CD4-positive, alpha-beta T cell (primary cell): ENCODE measurements at regions of chrX and their contacts with region 1.

Region 1: DNA sequence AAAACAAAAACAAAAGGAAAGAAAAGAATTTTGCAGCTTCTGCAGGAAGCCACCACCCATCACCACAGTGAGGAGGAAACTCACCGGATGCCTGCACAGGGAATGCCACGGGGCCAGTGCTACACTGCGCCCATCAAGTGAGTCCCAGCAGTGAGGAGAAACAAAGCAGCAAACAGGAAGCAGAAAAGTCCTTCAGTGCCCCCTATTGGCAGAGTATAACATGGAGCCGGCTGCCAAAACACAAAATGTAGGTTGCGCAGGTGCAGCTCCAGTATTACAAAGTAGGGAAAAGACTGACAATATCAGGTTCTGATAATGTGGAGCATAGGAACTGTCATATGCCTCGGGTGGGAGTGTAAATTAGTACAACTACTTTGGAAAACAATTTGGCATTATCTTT is 23.3 kb upstream of the SCML2 start:
- DNase-seq: peak in 5 of 14 experiments; percentile 2 to 57 (median 43)
- ATAC-seq: peak; percentile 69
- H3K4me3 ChIP-seq: no peak overlapping the region
- H3K4me3 Mint-ChIP-seq: no peak overlapping the region
- H3K27ac ChIP-seq: no peak overlapping the region
- H3K27ac Mint-ChIP-seq: no peak overlapping the region
- H3K4me1 ChIP-seq: peaks cover 6% of the 10 kb centered on the region
- H3K4me1 Mint-ChIP-seq: peaks cover 6% of the 10 kb centered on the region
- H3K27me3 ChIP-seq: no peaks in the 10 kb centered on the region
- H3K27me3 Mint-ChIP-seq: no peaks in the 10 kb centered on the region
- CTCF ChIP-seq: peak; percentile 58

Region 2: GRCh38 chrX:17242470-17242869 is 1135.3 kb before region 1 on chrX:
- CTCF ChIA-PET with region 1: no interaction called
- POLR2A ChIA-PET with region 1: no interaction called
- intact Hi-C with region 1: loop called in 1 of 2 experiments (anchors 5 kb)
- DNase-seq: peak in 8 of 14 experiments; percentile 0 to 49 (median 14)
- ATAC-seq: no peak
- H3K4me3 ChIP-seq: no peak overlapping the region
- H3K4me3 Mint-ChIP-seq: no peak overlapping the region
- H3K27ac ChIP-seq: no peak overlapping the region
- H3K27ac Mint-ChIP-seq: no peak overlapping the region
- H3K4me1 ChIP-seq: no peaks in the 10 kb centered on the region
- H3K4me1 Mint-ChIP-seq: no peaks in the 10 kb centered on the region
- H3K27me3 ChIP-seq: no peaks in the 10 kb centered on the region
- H3K27me3 Mint-ChIP-seq: peaks cover 11% of the 10 kb centered on the region
- CTCF ChIP-seq: peak; percentile 66

Region 3: GRCh38 chrX:17744896-17745523 is 632.8 kb before region 1 on chrX:
- CTCF ChIA-PET with region 1: no interaction called
- POLR2A ChIA-PET with region 1: no interaction called
- intact Hi-C with region 1: loop called in 1 of 2 experiments (anchors 10 kb)
- DNase-seq: peak in 3 of 14 experiments; percentile 11 to 26 (median 25)
- ATAC-seq: no peak
- H3K4me3 ChIP-seq: no peak overlapping the region
- H3K4me3 Mint-ChIP-seq: no peak overlapping the region
- H3K27ac ChIP-seq: no peak overlapping the region
- H3K27ac Mint-ChIP-seq: no peak overlapping the region
- H3K4me1 ChIP-seq: no peaks in the 10 kb centered on the region
- H3K4me1 Mint-ChIP-seq: peaks cover 43% of the 10 kb centered on the region
- H3K27me3 ChIP-seq: peaks cover 0 to 2% of the 10 kb centered on the region in 2 experiments
- H3K27me3 Mint-ChIP-seq: no peaks in the 10 kb centered on the region
- CTCF ChIP-seq: peak; percentile 38

Region 4: DNA sequence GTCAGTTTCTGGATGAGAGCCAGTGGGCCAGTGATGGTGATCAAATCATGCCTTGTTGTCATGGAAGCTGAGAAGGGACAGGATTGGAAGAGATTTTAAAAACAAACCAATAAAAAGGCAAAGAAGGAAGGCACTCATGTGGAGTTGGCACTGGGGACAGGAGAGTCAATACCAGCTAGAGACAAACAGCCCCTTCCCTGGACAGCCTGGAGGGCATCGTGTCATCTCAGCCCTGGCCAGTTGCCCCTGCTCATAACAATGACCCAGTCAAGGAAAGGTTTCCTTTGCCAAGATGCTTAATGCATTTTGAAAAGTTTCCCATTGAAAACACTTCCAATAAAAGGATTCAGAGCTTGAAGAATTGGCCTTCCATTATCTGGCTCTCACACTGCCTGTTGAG is 585.0 kb before region 1 on chrX:
- CTCF ChIA-PET with region 1: no interaction called
- POLR2A ChIA-PET with region 1: no interaction called
- intact Hi-C with region 1: loop called in 1 of 2 experiments (anchors 10 kb)
- DNase-seq: no peak
- ATAC-seq: no peak
- H3K4me3 ChIP-seq: no peak overlapping the region
- H3K4me3 Mint-ChIP-seq: no peak overlapping the region
- H3K27ac ChIP-seq: no peak overlapping the region
- H3K27ac Mint-ChIP-seq: no peak overlapping the region
- H3K4me1 ChIP-seq: peaks cover 5% of the 10 kb centered on the region
- H3K4me1 Mint-ChIP-seq: peaks cover 18% of the 10 kb centered on the region
- H3K27me3 ChIP-seq: no peaks in the 10 kb centered on the region
- H3K27me3 Mint-ChIP-seq: no peaks in the 10 kb centered on the region
- CTCF ChIP-seq: no peak

Region 5: GRCh38 chrX:17944833-17945497 is 432.8 kb before region 1 on chrX:
- CTCF ChIA-PET with region 1: no interaction called
- POLR2A ChIA-PET with region 1: no interaction called
- intact Hi-C with region 1: loop called in 1 of 2 experiments (anchors 10 kb)
- DNase-seq: peak in 4 of 14 experiments; percentile 11 to 38 (median 24)
- ATAC-seq: no peak
- H3K4me3 ChIP-seq: no peak overlapping the region
- H3K4me3 Mint-ChIP-seq: no peak overlapping the region
- H3K27ac ChIP-seq: no peak overlapping the region
- H3K27ac Mint-ChIP-seq: no peak overlapping the region
- H3K4me1 ChIP-seq: no peaks in the 10 kb centered on the region
- H3K4me1 Mint-ChIP-seq: no peaks in the 10 kb centered on the region
- H3K27me3 ChIP-seq: no peaks in the 10 kb centered on the region
- H3K27me3 Mint-ChIP-seq: no peaks in the 10 kb centered on the region
- CTCF ChIP-seq: peak; percentile 55

Region 6: GRCh38 chrX:18348047-18348446 is 29.7 kb before region 1 on chrX:
- CTCF ChIA-PET with region 1: no interaction called
- POLR2A ChIA-PET with region 1: no interaction called
- intact Hi-C with region 1: no loop called
- DNase-seq: no peak
- ATAC-seq: no peak
- H3K4me3 ChIP-seq: no peak overlapping the region
- H3K4me3 Mint-ChIP-seq: no peak overlapping the region
- H3K27ac ChIP-seq: no peak overlapping the region
- H3K27ac Mint-ChIP-seq: no peak overlapping the region
- H3K4me1 ChIP-seq: no peaks in the 10 kb centered on the region
- H3K4me1 Mint-ChIP-seq: no peaks in the 10 kb centered on the region
- H3K27me3 ChIP-seq: peaks cover 0 to 5% of the 10 kb centered on the region in 2 experiments
- H3K27me3 Mint-ChIP-seq: no peaks in the 10 kb centered on the region
- CTCF ChIP-seq: no peak